ENCODE measurements at regions of chr6 and their contacts with region 1.

Region 1: GRCh38 chr6:149140137-149140909 is 177.2 kb upstream of the TAB2 start:
- DNase-seq: no peak
- H3K4me3 ChIP-seq: no peak overlapping the region
- H3K27ac ChIP-seq: no peak overlapping the region
- H3K4me1 ChIP-seq: no peaks in the 10 kb centered on the region
- CTCF ChIP-seq: no peak

Region 2: DNA sequence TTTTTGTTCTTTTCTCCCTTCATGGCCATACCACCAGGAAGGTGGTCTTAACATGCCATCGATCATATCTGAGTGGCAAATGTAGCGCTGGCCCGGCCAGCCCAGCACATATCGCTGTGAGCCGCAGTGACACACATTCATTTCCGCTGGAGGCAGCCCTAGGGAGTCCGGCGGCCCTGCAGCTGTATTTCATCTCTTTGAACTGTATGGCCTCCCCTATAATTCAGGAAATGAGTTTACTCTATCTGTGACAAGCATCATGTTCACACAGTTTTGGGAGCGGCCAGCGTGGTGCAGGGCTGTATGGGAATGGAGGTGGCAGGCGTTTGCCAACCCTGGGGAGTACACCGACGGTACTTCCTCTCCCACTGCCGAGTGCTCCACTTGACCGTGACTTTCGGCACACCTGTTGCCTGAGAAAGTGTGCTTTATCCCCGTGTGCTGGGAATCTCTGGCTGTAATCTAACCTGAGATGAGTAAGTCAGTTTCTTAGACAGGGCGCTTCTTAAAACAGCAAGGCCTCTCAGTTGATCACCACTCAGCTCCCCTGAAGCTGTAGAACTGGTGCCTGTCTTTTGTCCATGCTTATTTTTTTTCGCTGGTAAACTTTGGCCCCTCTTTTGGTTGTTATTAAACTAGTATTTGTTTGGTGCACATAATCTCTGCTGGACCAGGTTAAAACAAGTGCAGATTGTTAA is 79.9 kb before region 1 on chr6:
- CTCF ChIA-PET with region 1: no interaction called
- POLR2A ChIA-PET with region 1: no interaction called
- intact Hi-C with region 1: no loop called
- DNase-seq: peak; percentile 64
- H3K4me3 ChIP-seq: peak overlapping the region; percentile 36
- H3K27ac ChIP-seq: no peak overlapping the region
- H3K4me1 ChIP-seq: peaks cover 12% of the 10 kb centered on the region
- CTCF ChIP-seq: no peak

Region 3: DNA sequence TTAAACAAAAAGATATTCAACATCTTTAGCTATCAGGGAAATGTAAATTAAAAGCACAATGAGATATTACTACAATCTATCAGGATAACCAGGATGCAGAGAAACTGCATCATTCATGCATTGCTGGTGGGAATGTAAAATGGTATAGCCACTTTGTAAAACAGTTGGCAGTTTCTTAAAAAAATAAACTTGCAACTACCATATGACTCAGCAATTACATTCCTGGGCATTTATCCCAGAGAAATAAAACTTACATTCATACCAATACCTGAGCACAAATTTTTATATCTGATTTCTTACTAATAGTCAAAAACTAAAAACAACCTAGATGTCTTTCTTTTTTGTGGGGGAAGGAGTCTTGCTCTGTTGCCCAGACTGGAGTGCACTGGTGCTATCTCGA is 13.1 kb before region 1 on chr6:
- CTCF ChIA-PET with region 1: no interaction called
- POLR2A ChIA-PET with region 1: interaction called, 11 read pairs
- intact Hi-C with region 1: no loop called
- DNase-seq: no peak
- H3K4me3 ChIP-seq: no peak overlapping the region
- H3K27ac ChIP-seq: no peak overlapping the region
- H3K4me1 ChIP-seq: no peaks in the 10 kb centered on the region
- CTCF ChIP-seq: no peak

Region 4: GRCh38 chr6:149454386-149454848 is 314.1 kb after region 1 on chr6:
- CTCF ChIA-PET with region 1: no interaction called
- POLR2A ChIA-PET with region 1: no interaction called
- intact Hi-C with region 1: no loop called
- DNase-seq: no peak
- H3K4me3 ChIP-seq: no peak overlapping the region
- H3K27ac ChIP-seq: no peak overlapping the region
- H3K4me1 ChIP-seq: no peaks in the 10 kb centered on the region
- CTCF ChIP-seq: no peak